ENCODE measurements at regions of chr4 and their contacts with region 1.

Region 1: DNA sequence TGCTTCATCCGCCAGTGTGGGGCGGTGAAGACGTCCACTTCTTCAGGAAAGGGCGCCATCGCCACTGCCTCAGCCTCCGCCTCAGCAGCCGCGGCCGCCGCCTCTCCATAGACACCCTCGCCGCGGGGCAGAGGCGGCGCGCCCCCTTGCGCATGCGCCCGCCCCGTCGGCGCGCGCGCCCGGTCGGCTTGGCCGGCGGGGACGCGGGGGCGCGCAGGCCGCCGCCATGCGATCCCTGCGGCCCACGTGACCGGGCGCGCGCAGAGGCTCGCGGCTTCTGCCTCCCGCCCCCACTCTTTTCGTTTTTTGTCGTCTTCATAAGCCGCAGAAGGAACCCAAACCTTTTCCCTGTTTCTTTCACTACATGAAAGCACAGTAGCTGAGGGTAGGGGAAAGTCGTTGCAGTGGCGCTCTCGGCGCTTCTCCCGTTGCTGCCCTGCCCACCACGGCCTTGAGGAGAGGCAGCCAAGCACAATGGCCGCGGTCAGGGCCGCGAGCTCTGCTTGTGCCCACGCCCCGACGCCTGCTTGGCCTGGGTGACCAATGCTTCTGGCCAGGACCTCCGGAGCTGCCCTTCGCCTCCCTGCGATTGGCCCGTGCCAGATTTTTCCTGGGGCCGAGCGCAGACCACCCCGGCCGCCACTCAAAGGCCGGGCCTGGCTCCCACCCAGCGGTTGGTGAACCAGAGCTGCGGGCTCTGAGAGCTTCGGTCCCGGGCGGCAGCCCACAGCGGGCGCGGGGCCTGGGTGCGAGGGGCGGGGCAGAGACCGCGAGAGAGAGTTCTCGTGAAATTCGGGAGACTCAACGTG is at the start of gene FBXL5:
- DNase-seq: peak; percentile 58 to 97 (median 80)
- ATAC-seq: peak; percentile 78
- H3K4me3 ChIP-seq: peak within 1 kb of the TSS; percentile 89
- H3K4me3 Mint-ChIP-seq: peak within 1 kb of the TSS; percentile 95
- H3K27ac ChIP-seq: peak within 1 kb of the TSS; percentile 90 to 93
- H3K27ac Mint-ChIP-seq: peak within 1 kb of the TSS; percentile 90
- H3K4me1 ChIP-seq: peaks cover 22% of the 10 kb centered on the region
- H3K4me1 Mint-ChIP-seq: peaks cover 46% of the 10 kb centered on the region
- H3K27me3 ChIP-seq: no peaks in the 10 kb centered on the region
- H3K27me3 Mint-ChIP-seq: no peaks in the 10 kb centered on the region
- CTCF ChIP-seq: no peak
- total RNA-seq, gene FBXL5: 60.1 to 62.5 TPM

Region 2: GRCh38 chr4:15675356-15675755 is 19.9 kb after region 1 on chr4:
- CTCF ChIA-PET with region 1: interaction called, 3 read pairs
- POLR2A ChIA-PET with region 1: interaction called, 42 read pairs
- intact Hi-C with region 1: no loop called
- DNase-seq: no peak
- ATAC-seq: no peak
- H3K4me3 ChIP-seq: no peak overlapping the region
- H3K4me3 Mint-ChIP-seq: no peak overlapping the region
- H3K27ac ChIP-seq: no peak overlapping the region
- H3K27ac Mint-ChIP-seq: no peak overlapping the region
- H3K4me1 ChIP-seq: no peaks in the 10 kb centered on the region
- H3K4me1 Mint-ChIP-seq: no peaks in the 10 kb centered on the region
- H3K27me3 ChIP-seq: no peaks in the 10 kb centered on the region
- H3K27me3 Mint-ChIP-seq: no peaks in the 10 kb centered on the region
- CTCF ChIP-seq: no peak

Region 3: GRCh38 chr4:15681207-15682015 is 26.0 kb after region 1 on chr4 and contains the start of gene FAM200B:
- CTCF ChIA-PET with region 1: interaction called, 5 read pairs
- POLR2A ChIA-PET with region 1: interaction called, 42 read pairs
- intact Hi-C with region 1: loop called (anchors 1 kb)
- DNase-seq: peak; percentile 92 to 98 (median 96)
- ATAC-seq: peak; percentile 96
- H3K4me3 ChIP-seq: peak within 1 kb of the TSS; percentile 84
- H3K4me3 Mint-ChIP-seq: peak within 1 kb of the TSS; percentile 94
- H3K27ac ChIP-seq: peak within 1 kb of the TSS; percentile 71 to 77
- H3K27ac Mint-ChIP-seq: peak within 1 kb of the TSS; percentile 93
- H3K4me1 ChIP-seq: peaks cover 6% of the 10 kb centered on the region
- H3K4me1 Mint-ChIP-seq: peaks cover 46% of the 10 kb centered on the region
- H3K27me3 ChIP-seq: no peaks in the 10 kb centered on the region
- H3K27me3 Mint-ChIP-seq: no peaks in the 10 kb centered on the region
- CTCF ChIP-seq: no peak
- total RNA-seq, gene FAM200B: 18.5 to 22.1 TPM

Region 4: DNA sequence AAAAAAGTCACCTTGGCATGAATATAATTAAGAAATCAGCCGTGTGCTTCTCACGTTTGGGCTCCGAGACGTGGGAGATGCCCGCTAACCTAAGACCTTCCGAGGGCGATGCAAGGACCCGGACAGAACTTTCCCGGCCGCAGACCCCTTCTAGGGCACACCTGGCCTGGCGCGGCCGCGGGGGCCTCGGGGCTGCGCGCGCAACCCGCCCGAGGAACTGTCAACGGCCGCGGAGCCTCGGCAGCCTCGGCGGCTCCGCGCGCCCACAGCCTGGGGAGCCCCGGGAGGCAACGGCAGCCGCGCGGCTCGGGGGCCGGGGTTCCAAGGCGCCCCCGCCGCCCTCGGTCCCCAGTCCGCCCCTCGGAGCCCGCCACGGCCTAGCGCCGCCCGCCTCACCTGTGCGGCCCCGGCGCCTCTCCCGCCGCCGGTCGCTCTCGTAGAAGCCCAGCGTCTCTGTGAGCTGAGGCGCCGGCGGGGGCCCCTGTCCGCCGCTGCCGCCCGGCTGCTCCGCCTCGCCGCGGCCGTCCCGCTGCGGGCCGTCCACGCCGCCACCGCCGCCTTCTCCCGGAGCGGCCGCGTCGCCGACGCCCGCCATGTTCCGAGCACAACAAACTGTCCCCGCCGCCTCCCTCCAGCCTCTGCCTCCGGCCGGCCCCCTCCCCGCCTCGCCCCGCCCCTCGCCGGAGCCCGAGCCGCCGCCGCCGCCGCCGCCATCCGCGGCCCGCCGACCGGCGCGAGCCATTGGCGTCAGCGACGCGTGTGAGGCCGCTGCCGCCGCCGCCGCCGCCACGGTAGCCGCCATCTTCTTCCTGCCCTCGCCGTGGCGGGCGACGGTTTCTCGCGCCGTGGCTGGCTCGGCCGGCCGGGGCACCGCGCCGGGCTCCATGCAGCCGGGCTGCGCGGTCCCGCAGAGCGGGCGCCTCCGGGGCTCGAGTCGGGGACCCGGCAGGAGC is 570.7 kb after region 1 on chr4 and contains the start of gene TAPT1:
- CTCF ChIA-PET with region 1: no interaction called
- POLR2A ChIA-PET with region 1: interaction called, 3 read pairs
- intact Hi-C with region 1: loop called in 1 of 2 experiments (anchors 10 kb)
- DNase-seq: peak; percentile 45 to 89 (median 71)
- ATAC-seq: peak; percentile 52
- H3K4me3 ChIP-seq: peak within 1 kb of the TSS; percentile 80
- H3K4me3 Mint-ChIP-seq: peak within 1 kb of the TSS; percentile 97
- H3K27ac ChIP-seq: peak within 1 kb of the TSS; percentile 71 to 73
- H3K27ac Mint-ChIP-seq: peak within 1 kb of the TSS; percentile 97
- H3K4me1 ChIP-seq: peaks cover 21% of the 10 kb centered on the region
- H3K4me1 Mint-ChIP-seq: peaks cover 65% of the 10 kb centered on the region
- H3K27me3 ChIP-seq: no peaks in the 10 kb centered on the region
- H3K27me3 Mint-ChIP-seq: no peaks in the 10 kb centered on the region
- CTCF ChIP-seq: no peak
- total RNA-seq, gene TAPT1: 70.6 to 77.1 TPM

Region 5: GRCh38 chr4:17027495-17027894 is 1372.1 kb after region 1 on chr4:
- CTCF ChIA-PET with region 1: no interaction called
- POLR2A ChIA-PET with region 1: no interaction called
- intact Hi-C with region 1: no loop called
- DNase-seq: no peak
- ATAC-seq: no peak
- H3K4me3 ChIP-seq: no peak overlapping the region
- H3K4me3 Mint-ChIP-seq: no peak overlapping the region
- H3K27ac ChIP-seq: no peak overlapping the region
- H3K27ac Mint-ChIP-seq: no peak overlapping the region
- H3K4me1 ChIP-seq: no peaks in the 10 kb centered on the region
- H3K4me1 Mint-ChIP-seq: no peaks in the 10 kb centered on the region
- H3K27me3 ChIP-seq: no peaks in the 10 kb centered on the region
- H3K27me3 Mint-ChIP-seq: peaks cover 19% of the 10 kb centered on the region
- CTCF ChIP-seq: no peak

Measured in CD4-positive, alpha-beta T cell (primary cell).